Mucosa of descending colon (tissue), 3 donors: ENCODE measurements at regions of chr17 and their contacts with region 1.

Region 1: GRCh38 chr17:71084219-71084618 is 914.9 kb downstream of the KCNJ2 start:
- DNase-seq: peak in 2 of 3 donors; percentile 23 to 81
- ATAC-seq: no peak
- H3K4me3 ChIP-seq: no peak overlapping the region
- H3K4me1 ChIP-seq: no peaks in the 10 kb centered on the region
- CTCF ChIP-seq: no peak

Region 2: GRCh38 chr17:70636517-70637133 is 447.6 kb before region 1 on chr17:
- intact Hi-C with region 1: loop called in 1 of 2 experiments (anchors 10 kb)
- DNase-seq: peak in 1 of 3 donors; percentile 43
- ATAC-seq: peak; percentile 50
- H3K4me3 ChIP-seq: no peak overlapping the region
- H3K4me1 ChIP-seq: no peaks in the 10 kb centered on the region
- CTCF ChIP-seq: peak; percentile 23

Region 3: DNA sequence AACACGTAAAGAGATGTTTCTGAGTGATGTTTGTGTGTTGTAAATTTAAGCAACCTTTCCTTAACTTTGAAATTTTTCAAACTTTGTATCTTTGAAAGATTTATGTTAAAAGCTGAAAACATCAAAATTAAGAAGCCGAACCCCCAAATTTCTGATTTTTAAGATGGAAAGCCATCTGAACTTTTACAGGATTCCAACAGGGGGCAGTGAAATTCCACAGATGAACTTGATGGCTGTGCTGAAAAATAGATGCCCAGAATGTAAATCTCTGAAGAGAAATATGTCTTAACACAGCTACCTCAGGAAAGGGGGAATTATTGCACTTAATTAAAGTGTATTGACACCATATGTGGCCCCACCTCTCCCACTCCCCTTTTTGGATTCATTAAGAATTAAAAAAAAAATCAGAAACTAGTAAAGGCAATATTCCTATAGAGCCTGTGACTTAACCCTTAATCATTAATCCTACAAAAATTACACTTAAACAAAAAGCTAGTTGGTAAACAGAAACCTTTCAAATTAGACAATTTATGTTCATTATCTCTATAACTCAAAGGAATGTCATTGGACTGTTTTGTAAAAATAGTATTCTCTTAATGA is 317.0 kb before region 1 on chr17:
- intact Hi-C with region 1: loop called in 1 of 2 experiments (anchors 5 kb)
- DNase-seq: no peak
- ATAC-seq: no peak
- H3K4me3 ChIP-seq: no peak overlapping the region
- H3K4me1 ChIP-seq: no peaks in the 10 kb centered on the region
- CTCF ChIP-seq: peak; percentile 39

Region 4: DNA sequence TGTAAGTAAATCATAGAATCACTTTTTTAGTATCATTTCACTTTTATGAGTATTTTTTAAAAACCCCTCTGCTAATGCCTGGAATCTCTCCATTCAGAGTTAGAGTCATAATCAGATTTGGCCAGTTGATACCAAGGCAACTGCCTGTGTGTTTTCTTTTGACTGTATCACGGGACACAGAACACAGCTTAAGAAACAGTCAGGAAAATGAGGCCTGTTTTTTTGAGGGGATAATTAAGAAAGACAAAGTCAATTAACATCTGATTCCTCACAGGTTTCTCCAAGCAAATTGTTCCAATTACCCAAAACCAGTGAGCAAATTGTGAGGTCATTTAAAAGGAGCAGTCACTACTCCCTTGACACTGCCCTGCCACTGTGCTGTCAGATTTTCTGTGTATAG is 92.1 kb after region 1 on chr17:
- intact Hi-C with region 1: no loop called
- DNase-seq: no peak
- ATAC-seq: no peak
- H3K4me3 ChIP-seq: no peak overlapping the region
- H3K4me1 ChIP-seq: peaks cover 8% of the 10 kb centered on the region
- CTCF ChIP-seq: no peak